Activated CD4-positive, alpha-beta memory T cell treated with anti-CD3 and anti-CD28 coated beads for 36 hours (primary cell): ENCODE measurements at regions of chr16 and their contacts with region 1.

Region 1: DNA sequence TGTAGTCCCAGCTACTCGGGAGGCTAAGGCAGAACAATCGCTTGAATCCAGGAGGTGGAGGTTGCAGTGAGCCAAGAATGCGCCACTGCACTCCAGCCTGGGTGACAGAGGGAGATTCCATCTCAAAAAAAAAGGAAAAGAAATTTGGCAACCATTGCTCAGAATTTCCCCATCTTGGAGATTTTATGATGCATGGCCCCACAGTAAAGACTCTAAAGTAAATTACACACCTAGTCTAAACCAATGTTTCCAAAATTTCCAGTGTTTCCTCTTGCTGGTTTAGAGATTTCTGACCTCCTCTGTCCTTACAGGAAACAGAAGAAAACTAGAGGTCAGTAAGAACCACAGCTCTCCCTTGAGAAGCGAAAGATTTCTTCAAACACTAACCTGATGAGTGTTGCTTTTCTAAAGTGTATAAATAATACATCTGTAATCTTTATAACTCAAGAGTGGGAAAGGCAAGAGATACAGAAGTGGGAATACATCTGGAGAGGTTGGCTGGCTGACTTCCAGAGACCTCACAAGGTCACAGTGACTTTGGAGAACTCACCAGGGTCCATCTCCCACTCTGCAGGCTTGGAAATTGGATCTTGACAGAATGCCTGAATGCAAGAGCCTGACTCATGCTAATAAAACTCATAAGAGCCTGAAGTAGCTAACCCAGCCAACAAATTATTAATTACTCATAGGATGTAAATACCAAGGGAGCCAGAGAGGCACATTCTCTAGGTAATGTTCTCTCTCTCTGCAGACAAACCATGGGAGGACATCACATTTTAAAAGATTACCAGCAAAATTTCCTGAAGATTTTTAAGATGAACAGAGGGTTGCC is 8.8 kb downstream of the ADAT1 start:
- DNase-seq: no peak
- H3K4me3 Mint-ChIP-seq: no peak overlapping the region
- H3K27ac Mint-ChIP-seq: no peak overlapping the region
- H3K4me1 Mint-ChIP-seq: peaks cover 33% of the 10 kb centered on the region
- H3K27me3 Mint-ChIP-seq: no peaks in the 10 kb centered on the region

Region 2: DNA sequence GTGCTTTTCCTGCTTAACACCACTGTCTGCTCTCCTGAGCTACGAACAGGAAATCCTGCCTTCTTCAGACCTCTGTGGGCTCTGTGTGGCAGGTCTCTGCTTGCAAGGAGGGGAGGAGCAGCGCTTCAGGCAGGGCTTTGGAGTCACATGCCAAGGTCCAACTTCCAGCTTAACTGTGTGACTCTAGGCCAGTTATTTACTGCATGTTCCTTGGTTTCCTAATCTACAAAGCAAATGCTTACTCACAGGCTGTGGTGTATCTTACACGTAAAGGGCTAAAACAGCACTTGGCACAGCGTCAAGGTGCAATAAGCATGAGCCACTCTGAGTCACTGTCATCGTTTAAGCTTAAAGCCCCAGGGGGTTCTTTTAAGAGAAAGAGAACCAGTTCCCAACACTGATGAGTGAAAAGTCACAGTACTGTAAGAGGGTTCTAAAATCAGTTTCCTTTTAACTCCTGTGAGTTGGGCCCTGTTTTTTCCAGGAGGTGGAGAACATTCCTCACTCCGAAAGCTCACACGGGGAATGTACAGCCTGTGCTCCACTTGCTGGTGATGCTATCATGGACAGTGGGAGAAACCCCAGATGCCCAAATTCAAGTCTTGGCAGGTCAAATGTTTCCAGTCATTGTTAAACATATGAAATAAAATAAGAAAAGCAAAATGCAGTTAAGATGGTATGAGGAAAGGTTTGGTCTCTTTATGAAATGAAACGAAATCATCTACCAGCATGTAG is 308.8 kb before region 1 on chr16:
- CTCF ChIA-PET with region 1: no interaction called
- POLR2A ChIA-PET with region 1: no interaction called
- intact Hi-C with region 1: loop called (anchors 10 kb)
- DNase-seq: peak; percentile 72
- H3K4me3 Mint-ChIP-seq: no peak overlapping the region
- H3K27ac Mint-ChIP-seq: peak overlapping the region; percentile 68
- H3K4me1 Mint-ChIP-seq: peaks cover 18% of the 10 kb centered on the region
- H3K27me3 Mint-ChIP-seq: no peaks in the 10 kb centered on the region

Region 3: DNA sequence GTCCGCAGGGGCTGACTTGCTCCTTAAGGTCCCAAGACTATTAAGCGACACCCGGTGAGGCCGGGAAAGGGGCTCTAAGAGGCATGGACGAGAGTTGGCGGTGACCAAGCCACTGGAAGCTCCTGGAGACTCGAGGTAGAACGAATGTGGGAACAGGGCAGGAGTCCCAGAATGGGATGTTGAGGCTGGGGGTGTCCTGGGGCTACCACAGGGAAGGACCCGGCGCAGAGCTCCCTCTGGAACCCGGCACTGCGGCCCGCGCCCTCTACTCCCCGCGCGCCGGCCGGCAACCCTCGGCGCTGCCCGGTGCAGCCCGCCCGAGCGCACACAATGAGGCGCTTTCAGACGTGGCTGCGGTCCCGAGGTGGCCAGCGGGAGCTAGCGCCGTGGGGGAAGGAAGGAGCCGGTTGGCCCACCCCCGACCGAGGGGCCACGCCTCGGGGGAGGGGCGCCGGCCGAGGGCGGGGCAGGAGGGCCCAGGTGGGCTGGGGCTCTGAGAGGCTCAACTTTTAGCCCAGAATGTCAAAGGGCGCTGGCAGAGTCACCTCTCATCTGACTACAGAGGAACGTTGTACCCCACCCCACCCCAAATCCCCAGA is 119.1 kb before region 1 on chr16 and contains the start of gene CHST6:
- CTCF ChIA-PET with region 1: no interaction called
- POLR2A ChIA-PET with region 1: no interaction called
- intact Hi-C with region 1: no loop called
- DNase-seq: peak; percentile 32
- H3K4me3 Mint-ChIP-seq: peak within 1 kb of the TSS; percentile 45
- H3K27ac Mint-ChIP-seq: no peak within 1 kb of the TSS
- H3K4me1 Mint-ChIP-seq: peaks cover 6% of the 10 kb centered on the region
- H3K27me3 Mint-ChIP-seq: peaks cover 24% of the 10 kb centered on the region
- total RNA-seq, gene CHST6: not detected

Region 4: DNA sequence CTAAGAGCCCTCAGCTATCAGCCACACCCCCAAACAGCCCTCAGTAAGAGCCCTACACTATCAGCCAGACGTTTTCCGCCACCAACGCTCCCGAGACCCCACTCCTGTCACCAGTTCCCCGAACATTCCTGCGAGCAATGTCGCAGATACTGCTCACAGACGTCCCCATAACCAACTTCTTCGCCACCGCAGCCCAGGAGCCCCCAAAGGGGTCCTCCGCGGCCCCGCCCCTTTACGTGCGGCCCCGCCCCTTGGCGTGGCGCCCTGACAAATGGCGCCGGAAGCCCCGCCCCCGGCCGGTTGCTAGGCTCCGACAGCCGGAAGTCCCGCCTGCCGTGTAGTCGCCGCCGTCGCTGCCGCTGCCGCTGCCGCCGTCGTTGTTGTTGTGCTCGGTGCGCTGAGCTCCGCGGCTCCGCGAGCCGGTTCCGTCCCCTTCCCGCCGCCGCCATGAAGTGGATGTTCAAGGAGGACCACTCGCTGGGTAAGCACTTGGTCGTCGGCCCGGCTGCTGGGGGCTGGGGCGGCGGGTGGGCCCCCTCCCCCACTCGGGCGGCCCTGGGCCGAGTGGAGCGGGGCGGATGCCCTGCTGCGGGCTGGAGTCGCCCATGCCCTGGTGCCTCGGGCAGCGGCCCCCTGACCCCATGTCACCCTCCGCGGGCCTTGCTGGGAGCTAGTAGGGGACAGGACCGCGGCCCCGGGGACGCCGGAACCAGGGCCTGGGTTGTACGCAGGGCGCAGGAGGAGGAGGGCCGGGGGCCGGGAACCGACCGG is 48.1 kb before region 1 on chr16 and contains the start of gene GABARAPL2:
- CTCF ChIA-PET with region 1: interaction called, 3 read pairs
- POLR2A ChIA-PET with region 1: no interaction called
- intact Hi-C with region 1: loop called (anchors 1 kb)
- DNase-seq: peak; percentile 92
- H3K4me3 Mint-ChIP-seq: peak within 1 kb of the TSS; percentile 94
- H3K27ac Mint-ChIP-seq: peak within 1 kb of the TSS; percentile 85
- H3K4me1 Mint-ChIP-seq: peaks cover 40% of the 10 kb centered on the region
- H3K27me3 Mint-ChIP-seq: peaks cover 7% of the 10 kb centered on the region
- total RNA-seq, gene GABARAPL2: 71.5 to 76.1 TPM

Region 5: GRCh38 chr16:75593825-75594820 is 20.2 kb before region 1 on chr16:
- CTCF ChIA-PET with region 1: no interaction called
- POLR2A ChIA-PET with region 1: no interaction called
- intact Hi-C with region 1: loop called (anchors 1 kb)
- DNase-seq: peak; percentile 36
- H3K4me3 Mint-ChIP-seq: no peak overlapping the region
- H3K27ac Mint-ChIP-seq: peak overlapping the region; percentile 65
- H3K4me1 Mint-ChIP-seq: peaks cover 14% of the 10 kb centered on the region
- H3K27me3 Mint-ChIP-seq: no peaks in the 10 kb centered on the region

Region 6: GRCh38 chr16:77308163-77308561 is 1693.9 kb after region 1 on chr16:
- CTCF ChIA-PET with region 1: no interaction called
- POLR2A ChIA-PET with region 1: no interaction called
- intact Hi-C with region 1: loop called (anchors 2 kb)
- DNase-seq: no peak
- H3K4me3 Mint-ChIP-seq: no peak overlapping the region
- H3K27ac Mint-ChIP-seq: peak overlapping the region; percentile 72
- H3K4me1 Mint-ChIP-seq: peaks cover 18% of the 10 kb centered on the region
- H3K27me3 Mint-ChIP-seq: peaks cover 14% of the 10 kb centered on the region